T-cell (primary cell): ENCODE measurements at regions of chr2 and their contacts with region 1.

Region 1: DNA sequence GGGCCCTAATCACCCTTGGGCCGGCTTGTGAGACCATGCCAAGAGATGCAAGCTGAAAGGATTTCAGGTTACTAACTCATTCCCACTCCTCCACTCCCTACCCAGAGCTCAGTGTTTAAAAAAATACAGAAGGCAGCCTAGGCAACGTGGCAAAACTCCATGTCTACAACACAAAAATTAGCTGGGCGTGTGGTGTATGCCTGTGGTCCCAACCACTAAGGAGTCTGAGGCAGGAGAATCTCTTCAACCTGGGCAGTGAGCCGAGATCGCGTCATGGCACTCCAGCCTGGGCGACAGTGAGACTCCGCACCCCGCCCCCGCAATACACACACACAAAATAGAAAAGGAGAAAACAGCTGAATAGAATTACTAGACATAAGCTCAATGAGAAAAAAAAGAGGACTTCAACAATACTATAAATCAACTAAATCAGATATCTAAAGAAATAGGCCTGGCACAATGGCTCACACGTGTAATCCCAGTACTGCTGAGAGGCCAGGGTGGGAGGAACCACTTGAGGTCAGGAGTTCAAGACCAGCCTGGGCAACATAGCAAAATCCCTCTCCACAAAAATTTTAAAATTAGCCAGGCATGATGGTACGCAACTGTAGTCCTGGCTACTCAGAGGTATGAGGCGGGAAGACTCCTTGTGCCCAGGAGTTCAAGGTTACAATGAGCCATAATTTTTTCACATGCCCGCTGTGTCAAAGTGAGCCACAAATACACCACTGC is 10.1 kb downstream of the IWS1 start:
- DNase-seq: no peak
- ATAC-seq: no peak
- H3K4me3 ChIP-seq: no peak overlapping the region
- H3K4me3 Mint-ChIP-seq: no peak overlapping the region
- H3K27ac ChIP-seq: no peak overlapping the region
- H3K27ac Mint-ChIP-seq: no peak overlapping the region
- H3K4me1 ChIP-seq: peaks cover 13 to 26% of the 10 kb centered on the region in 2 experiments
- H3K4me1 Mint-ChIP-seq: peaks cover 78 to 87% (median 87%) of the 10 kb centered on the region in 3 donors
- H3K27me3 ChIP-seq: no peaks in the 10 kb centered on the region
- H3K27me3 Mint-ChIP-seq: no peaks in the 10 kb centered on the region

Region 2: DNA sequence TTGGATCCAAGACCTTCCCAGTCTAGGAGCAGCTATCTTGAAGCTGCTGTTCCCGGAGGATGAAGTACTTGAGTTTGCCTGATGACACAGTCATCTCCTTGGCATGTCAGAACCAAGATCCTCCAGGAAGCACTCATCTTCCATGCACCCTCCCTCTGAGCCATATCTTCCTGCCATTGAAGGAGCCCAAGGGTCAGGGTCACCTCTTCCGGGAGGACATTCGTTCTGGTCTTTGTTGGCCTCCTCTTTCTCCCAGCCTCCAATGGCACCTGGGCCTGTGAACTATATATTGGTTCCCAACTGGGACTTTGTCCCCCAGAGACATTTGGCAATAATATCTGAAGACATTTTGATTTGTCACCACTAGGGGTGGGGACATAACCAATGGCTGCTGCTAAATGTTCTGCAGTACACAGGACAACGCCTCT is 15.0 kb after region 1 on chr2:
- CTCF ChIA-PET with region 1: no interaction called
- POLR2A ChIA-PET with region 1: interaction called, 5 to 10 read pairs
- DNase-seq: no peak
- ATAC-seq: no peak
- H3K4me3 ChIP-seq: no peak overlapping the region
- H3K4me3 Mint-ChIP-seq: no peak overlapping the region
- H3K27ac ChIP-seq: no peak overlapping the region
- H3K27ac Mint-ChIP-seq: no peak overlapping the region
- H3K4me1 ChIP-seq: peaks cover 2 to 5% of the 10 kb centered on the region in 2 experiments
- H3K4me1 Mint-ChIP-seq: peaks cover 11 to 15% (median 15%) of the 10 kb centered on the region in 3 donors
- H3K27me3 ChIP-seq: peaks cover 0 to 19% of the 10 kb centered on the region in 2 experiments
- H3K27me3 Mint-ChIP-seq: peaks cover 0 to 8% of the 10 kb centered on the region in 2 donors

Region 3: GRCh38 chr2:128103407-128103806 is 587.2 kb after region 1 on chr2:
- CTCF ChIA-PET with region 1: no interaction called
- POLR2A ChIA-PET with region 1: interaction called in 1 of 2 experiments, 10 read pairs
- DNase-seq: no peak
- ATAC-seq: no peak
- H3K4me3 ChIP-seq: no peak overlapping the region
- H3K4me3 Mint-ChIP-seq: no peak overlapping the region
- H3K27ac ChIP-seq: no peak overlapping the region
- H3K27ac Mint-ChIP-seq: no peak overlapping the region
- H3K4me1 ChIP-seq: no peaks in the 10 kb centered on the region
- H3K4me1 Mint-ChIP-seq: peaks cover 13 to 25% (median 15%) of the 10 kb centered on the region in 3 donors
- H3K27me3 ChIP-seq: no peaks in the 10 kb centered on the region
- H3K27me3 Mint-ChIP-seq: no peaks in the 10 kb centered on the region